Right ventricle myocardium inferior (tissue), 1 donor: ENCODE measurements at regions of chr12 and their contacts with region 1.

Region 1: DNA sequence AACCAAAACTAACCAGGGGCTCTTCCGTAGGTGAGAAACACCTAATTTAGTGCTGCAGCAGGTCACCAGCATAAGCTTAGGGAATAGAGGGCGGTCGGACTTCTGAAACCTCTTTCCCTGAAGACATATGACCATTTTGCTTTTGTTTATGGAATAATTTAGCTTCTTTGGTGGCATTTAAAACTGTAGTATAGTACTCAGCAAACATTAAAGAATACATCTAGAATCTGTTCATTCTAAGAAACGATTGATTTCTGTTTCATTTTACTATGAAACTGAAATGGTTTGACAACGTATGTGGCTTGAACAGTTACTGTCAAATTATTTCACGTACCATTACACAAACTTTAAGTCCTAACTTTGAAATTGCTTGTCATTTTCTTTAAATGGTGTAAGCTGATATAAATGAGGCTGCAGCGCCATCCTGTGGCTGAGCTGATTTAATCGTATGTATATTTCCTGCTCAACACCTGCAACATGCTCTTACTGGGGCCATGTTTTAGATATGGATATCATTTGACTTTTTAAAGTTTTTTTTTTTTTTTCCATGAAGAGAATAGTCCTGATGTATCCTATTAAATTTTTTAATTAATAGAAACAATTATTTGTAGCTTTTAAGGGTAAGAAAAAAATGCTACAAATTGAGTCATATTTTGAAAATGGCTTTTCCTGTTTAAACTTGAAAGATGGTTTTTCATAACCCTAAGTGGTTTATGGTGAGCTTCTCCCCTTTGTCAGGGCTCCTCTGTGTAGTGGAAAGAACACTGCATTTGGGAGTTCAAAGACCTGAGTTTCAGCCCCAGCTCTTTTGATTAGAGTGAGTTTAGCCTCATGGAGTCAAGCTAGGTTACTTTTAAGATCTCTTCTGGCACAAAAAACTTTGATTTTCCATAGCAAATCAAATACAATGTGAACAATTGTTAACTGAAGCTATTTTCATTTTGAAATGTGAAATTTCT is 27.4 kb downstream of the CFAP54 start:
- DNase-seq: peak; percentile 83
- ATAC-seq: no peak

Region 2: GRCh38 chr12:96061864-96062453 is 454.8 kb before region 1 on chr12:
- intact Hi-C with region 1: loop called (anchors 1 kb)
- DNase-seq: no peak
- ATAC-seq: peak; percentile 82

Region 3: DNA sequence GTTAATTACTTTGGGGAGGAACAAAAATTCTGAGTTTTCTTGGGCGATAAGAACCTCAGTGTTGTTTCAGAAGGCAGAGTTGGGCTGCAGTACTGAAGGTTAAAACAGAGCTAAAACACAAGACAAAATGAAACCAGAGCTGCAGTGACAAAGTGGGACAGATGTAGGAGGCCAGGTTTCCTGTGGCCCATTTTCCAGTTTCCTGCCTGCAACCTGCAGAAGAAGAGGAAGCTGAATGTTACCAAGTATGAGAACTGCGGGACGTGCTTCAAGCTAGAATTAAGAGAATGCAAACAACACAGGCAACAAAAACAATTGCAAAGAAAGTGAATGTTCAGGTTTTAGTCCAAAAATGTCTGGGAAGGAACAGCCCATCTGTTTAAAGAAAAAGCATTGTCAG is 304.8 kb before region 1 on chr12:
- intact Hi-C with region 1: loop called (anchors 5 kb)
- DNase-seq: no peak
- ATAC-seq: no peak

Region 4: DNA sequence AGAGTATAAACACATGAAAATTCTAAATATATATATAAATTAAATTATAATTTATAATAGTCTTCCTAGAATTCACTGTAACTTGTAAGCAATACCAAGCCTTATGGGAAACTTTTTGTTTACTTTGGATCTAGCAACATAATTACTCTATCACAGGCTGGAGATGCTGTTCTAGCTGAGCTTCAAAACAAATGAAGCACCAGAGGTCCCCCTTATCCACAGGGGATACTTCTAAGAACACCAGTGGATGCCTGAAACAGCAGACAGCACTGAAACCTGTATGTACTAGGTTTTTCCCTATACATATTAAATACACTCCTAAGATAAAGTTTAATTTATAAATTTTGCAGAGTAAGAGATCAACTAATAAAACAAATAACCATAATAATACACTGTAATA is 213.1 kb before region 1 on chr12:
- intact Hi-C with region 1: loop called (anchors 10 kb)
- DNase-seq: no peak
- ATAC-seq: no peak